Activated CD4-positive, alpha-beta memory T cell treated with anti-CD3 and anti-CD28 coated beads for 36 hours (primary cell): ENCODE measurements at regions of chr13 and their contacts with region 1.

Region 1: DNA sequence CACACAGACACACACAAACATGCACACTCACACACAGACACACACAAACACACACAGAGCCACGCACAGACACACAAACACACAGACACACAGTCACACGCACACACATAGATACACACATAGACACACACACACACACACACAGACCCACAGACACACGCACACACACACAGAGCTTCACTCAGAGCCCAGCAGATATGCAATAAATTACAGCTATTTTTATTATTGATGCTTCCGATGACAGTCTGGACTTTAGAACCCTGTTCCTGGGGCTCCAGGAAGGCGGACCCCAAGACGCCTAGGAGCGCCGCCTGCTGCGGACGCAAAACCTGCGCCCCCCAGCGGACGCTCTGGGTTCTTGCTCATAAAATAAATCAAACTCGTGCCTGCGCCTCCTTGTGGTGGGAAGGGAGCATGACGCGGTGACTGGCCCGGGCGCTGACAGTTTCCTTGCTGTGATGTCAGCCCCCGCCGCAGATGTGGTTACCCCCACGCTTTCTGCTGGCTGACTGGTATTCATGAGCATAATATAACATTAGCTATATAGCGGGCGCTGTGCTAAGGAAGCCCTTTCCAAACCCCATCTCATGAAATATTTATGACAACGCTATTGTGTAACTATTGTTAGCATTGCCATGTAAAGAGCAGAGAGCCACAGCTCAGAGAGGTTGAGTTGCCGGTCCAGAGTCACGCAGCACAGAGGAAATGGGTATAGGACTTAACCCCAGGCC is 64.4 kb upstream of the TM9SF2 start:
- DNase-seq: peak; percentile 98
- H3K4me3 Mint-ChIP-seq: peak overlapping the region; percentile 23
- H3K27ac Mint-ChIP-seq: peak overlapping the region; percentile 69
- H3K4me1 Mint-ChIP-seq: peaks cover 64% of the 10 kb centered on the region
- H3K27me3 Mint-ChIP-seq: peaks cover 8% of the 10 kb centered on the region

Region 2: GRCh38 chr13:99087096-99087953 is 349.5 kb before region 1 on chr13:
- CTCF ChIA-PET with region 1: no interaction called
- POLR2A ChIA-PET with region 1: no interaction called
- intact Hi-C with region 1: loop called (anchors 2 kb)
- DNase-seq: peak; percentile 95
- H3K4me3 Mint-ChIP-seq: peak overlapping the region; percentile 99
- H3K27ac Mint-ChIP-seq: peak overlapping the region; percentile 97
- H3K4me1 Mint-ChIP-seq: peaks cover 32% of the 10 kb centered on the region
- H3K27me3 Mint-ChIP-seq: no peaks in the 10 kb centered on the region

Region 3: GRCh38 chr13:99258210-99258860 is 178.5 kb before region 1 on chr13 and contains the start of gene GPR18:
- CTCF ChIA-PET with region 1: interaction called, 22 read pairs
- POLR2A ChIA-PET with region 1: no interaction called
- intact Hi-C with region 1: no loop called
- DNase-seq: peak; percentile 57
- H3K4me3 Mint-ChIP-seq: peak within 1 kb of the TSS; percentile 77
- H3K27ac Mint-ChIP-seq: peak within 1 kb of the TSS; percentile 90
- H3K4me1 Mint-ChIP-seq: peaks cover 76% of the 10 kb centered on the region
- H3K27me3 Mint-ChIP-seq: no peaks in the 10 kb centered on the region
- total RNA-seq, gene GPR18: 2.4 to 2.8 TPM

Region 4: GRCh38 chr13:99307648-99308339 is 129.1 kb before region 1 on chr13:
- CTCF ChIA-PET with region 1: interaction called, 18 read pairs
- POLR2A ChIA-PET with region 1: interaction called, 16 read pairs
- intact Hi-C with region 1: loop called (anchors 1 kb)
- DNase-seq: peak; percentile 91
- H3K4me3 Mint-ChIP-seq: peak overlapping the region; percentile 93
- H3K27ac Mint-ChIP-seq: peak overlapping the region; percentile 99
- H3K4me1 Mint-ChIP-seq: peaks cover 72% of the 10 kb centered on the region
- H3K27me3 Mint-ChIP-seq: no peaks in the 10 kb centered on the region

Region 5: GRCh38 chr13:99374994-99375737 is 61.7 kb before region 1 on chr13:
- CTCF ChIA-PET with region 1: interaction called, 24 read pairs
- POLR2A ChIA-PET with region 1: no interaction called
- intact Hi-C with region 1: no loop called
- DNase-seq: peak; percentile 21
- H3K4me3 Mint-ChIP-seq: no peak overlapping the region
- H3K27ac Mint-ChIP-seq: no peak overlapping the region
- H3K4me1 Mint-ChIP-seq: peaks cover 76% of the 10 kb centered on the region
- H3K27me3 Mint-ChIP-seq: no peaks in the 10 kb centered on the region

Region 6: DNA sequence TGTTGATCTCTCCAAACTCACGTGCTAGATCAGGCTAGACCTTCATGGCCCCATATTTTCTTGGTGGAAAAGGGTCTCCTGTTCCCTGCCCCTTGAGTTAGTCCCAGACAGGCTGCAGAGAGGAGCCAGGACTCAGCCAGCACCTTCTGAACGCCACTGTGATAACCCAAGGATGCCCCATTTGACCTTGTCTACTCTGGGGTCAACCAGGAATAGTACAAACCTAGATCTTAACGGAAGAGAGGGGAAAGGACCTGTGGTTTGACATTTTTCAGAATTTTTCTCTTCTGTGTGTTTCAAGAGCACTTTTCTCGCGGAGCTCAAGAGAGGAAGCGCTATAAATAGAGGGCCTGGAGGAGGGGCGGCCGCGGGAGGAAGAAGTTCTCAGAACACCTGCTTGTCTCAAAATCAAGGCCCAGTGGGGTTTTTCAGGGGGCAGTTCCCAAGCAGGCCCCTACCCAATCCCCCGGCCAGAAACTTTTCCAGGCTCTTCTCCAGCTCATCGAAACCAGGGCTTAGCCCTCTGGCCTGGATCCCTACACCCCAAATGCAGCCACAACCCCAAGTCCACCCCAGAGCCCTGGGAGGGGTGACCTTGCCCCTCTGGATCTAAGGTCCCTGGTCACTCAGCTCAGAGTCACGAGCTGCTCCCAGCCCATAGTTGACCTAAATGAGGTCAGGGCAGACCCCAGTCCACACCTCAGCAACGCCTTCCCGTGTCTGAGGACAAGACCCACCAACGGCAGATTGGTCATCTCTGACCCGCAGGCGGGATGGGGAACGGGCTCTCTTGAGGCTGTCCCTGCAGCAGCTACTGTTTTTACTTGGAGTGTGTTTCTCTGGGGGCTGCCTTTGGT is 11.1 kb before region 1 on chr13:
- CTCF ChIA-PET with region 1: interaction called, 37 read pairs
- POLR2A ChIA-PET with region 1: interaction called, 6 read pairs
- intact Hi-C with region 1: loop called (anchors 1 kb)
- DNase-seq: peak; percentile 72
- H3K4me3 Mint-ChIP-seq: peak overlapping the region; percentile 56
- H3K27ac Mint-ChIP-seq: peak overlapping the region; percentile 85
- H3K4me1 Mint-ChIP-seq: peaks cover 56% of the 10 kb centered on the region
- H3K27me3 Mint-ChIP-seq: no peaks in the 10 kb centered on the region